Posterior vena cava (tissue), 2 donors: ENCODE measurements at regions of chr6 and their contacts with region 1.

Region 1: DNA sequence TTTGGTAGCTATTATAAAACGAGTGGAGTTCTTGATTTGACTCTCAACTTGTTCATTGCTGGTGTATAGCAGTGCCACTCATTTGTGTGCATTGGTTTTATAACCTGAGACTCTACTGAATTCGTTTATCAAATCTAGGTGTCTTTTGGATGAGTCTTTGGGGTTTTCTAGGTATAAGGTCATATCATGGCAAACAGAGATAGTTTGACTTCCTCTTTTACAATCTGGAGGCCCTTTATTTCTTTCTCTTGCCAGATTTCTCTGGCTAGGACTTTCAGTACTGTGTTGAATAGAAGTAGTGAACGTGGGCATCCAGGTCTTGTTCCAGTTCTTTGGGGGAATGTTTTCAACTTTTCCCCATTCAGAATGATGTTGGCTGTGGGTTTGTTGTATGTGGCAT is 38.8 kb downstream of the SUMO4 start:
- DNase-seq: no peak

Region 2: GRCh38 chr6:149423964-149424440 is 14.9 kb before region 1 on chr6:
- intact Hi-C with region 1: no loop called
- DNase-seq: no peak

Region 3: DNA sequence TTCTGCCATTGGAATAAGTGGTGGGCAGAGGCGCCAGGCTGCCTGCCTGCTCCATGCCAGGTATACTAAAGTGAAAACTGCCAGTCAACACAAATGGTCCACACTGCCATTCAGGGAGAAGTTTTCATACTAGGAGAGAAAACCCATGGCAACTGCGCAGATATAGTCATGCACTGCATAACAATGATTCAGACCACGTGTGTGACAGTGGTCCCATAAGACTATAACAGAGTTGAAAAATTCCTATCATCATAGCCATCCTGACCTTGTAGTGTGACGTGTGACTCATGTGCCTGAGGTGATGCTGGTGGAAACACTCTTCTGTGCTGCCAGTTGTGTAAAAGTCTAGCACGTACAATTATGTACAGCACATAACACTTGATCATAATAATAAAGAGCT is 20.9 kb after region 1 on chr6:
- intact Hi-C with region 1: loop called in 1 of 2 experiments (anchors 1 kb)
- DNase-seq: peak; percentile 34

Region 4: DNA sequence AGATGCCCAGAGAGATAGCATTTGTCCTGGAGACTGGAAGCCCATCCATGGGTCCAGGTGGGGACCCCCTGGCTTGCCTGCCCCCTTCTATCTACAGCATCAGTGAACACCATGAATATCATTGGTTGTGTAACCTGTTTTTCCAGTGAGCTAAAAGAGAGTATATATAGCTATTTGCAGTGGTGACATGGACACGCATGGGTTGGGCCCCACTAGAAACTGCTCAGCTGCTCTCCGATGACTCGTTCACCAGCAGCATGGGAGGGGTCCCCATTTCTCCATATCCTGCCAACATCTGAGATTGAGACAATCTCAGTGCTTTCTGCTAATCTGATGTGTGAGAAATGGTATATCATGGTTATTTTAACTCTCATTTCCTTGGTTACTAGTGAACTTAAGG is 50.0 kb after region 1 on chr6:
- intact Hi-C with region 1: no loop called
- DNase-seq: no peak